Colonic mucosa (tissue), 4 donors: ENCODE measurements at regions of chr17 and their contacts with region 1.

Region 1: DNA sequence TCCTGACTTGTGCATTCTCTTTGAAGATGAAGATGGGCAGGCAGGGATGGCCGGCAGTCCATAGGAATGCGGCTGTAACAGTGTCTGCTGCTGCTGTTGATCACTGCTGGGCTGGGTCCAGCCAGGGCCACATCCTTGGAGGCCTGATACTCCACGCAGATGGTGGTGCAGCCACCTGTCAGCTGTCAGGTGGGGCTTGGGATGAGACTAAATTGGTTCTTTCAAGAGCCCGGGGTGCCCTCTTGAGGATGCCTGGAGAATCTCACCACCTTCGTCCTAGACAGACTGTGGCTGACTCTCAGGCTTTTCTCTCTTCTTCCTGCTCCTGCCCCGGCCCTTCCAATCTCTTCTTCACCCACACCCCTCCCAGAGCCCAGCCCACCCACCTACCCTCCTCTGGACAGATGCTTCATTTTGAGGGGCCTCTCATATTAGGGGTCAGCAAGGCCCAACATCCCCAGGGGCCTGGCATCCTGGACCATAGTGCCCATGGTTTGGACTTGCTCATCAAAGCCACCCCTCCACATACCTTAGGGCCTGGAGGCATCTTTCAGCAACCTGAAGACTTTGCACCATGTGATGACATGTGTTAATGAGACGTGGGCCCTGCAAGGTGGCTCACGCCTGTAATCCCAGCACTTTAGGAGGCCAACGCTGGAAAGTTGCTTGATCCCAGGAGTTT is 19.1 kb downstream of the OSBPL7 start:
- DNase-seq: peak; percentile 55
- H3K4me3 ChIP-seq: no peak overlapping the region
- H3K27ac ChIP-seq: no peak overlapping the region
- H3K4me1 ChIP-seq: no peaks in the 10 kb centered on the region
- H3K27me3 ChIP-seq: no peaks in the 10 kb centered on the region
- CTCF ChIP-seq: peak; percentile 58

Region 2: GRCh38 chr17:47663912-47664625 is 138.4 kb before region 1 on chr17:
- intact Hi-C with region 1: loop called (anchors 10 kb)
- DNase-seq: peak; percentile 67
- H3K4me3 ChIP-seq: no peak overlapping the region
- H3K27ac ChIP-seq: no peak overlapping the region
- H3K4me1 ChIP-seq: peaks cover 6% of the 10 kb centered on the region
- H3K27me3 ChIP-seq: no peaks in the 10 kb centered on the region
- CTCF ChIP-seq: peak; percentile 72

Region 3: GRCh38 chr17:47698749-47699535 is 103.5 kb before region 1 on chr17:
- intact Hi-C with region 1: loop called (anchors 10 kb)
- DNase-seq: peak; percentile 69
- H3K4me3 ChIP-seq: no peak overlapping the region
- H3K27ac ChIP-seq: no peak overlapping the region
- H3K4me1 ChIP-seq: peaks cover 4% of the 10 kb centered on the region
- H3K27me3 ChIP-seq: no peaks in the 10 kb centered on the region
- CTCF ChIP-seq: peak; percentile 91

Region 4: GRCh38 chr17:47850692-47851573 is 48.5 kb after region 1 on chr17 and contains the start of gene SP6:
- intact Hi-C with region 1: no loop called
- DNase-seq: peak; percentile 94
- H3K4me3 ChIP-seq: peak within 1 kb of the TSS; percentile 45
- H3K27ac ChIP-seq: peak within 1 kb of the TSS; percentile 38
- H3K4me1 ChIP-seq: no peaks in the 10 kb centered on the region
- H3K27me3 ChIP-seq: peaks cover 44% of the 10 kb centered on the region
- CTCF ChIP-seq: no peak
- total RNA-seq, gene SP6: 8.7 to 8.8 TPM